ENCODE measurements at regions of chr7 and their contacts with region 1.

Region 1: GRCh38 chr7:44847508-44847920 is 373 bp downstream of the H2AZ2 start:
- DNase-seq: peak; percentile 92
- H3K4me3 Mint-ChIP-seq: peak overlapping the region; percentile 92
- H3K27ac Mint-ChIP-seq: peak overlapping the region; percentile 95
- H3K4me1 Mint-ChIP-seq: peaks cover 41% of the 10 kb centered on the region
- H3K27me3 Mint-ChIP-seq: no peaks in the 10 kb centered on the region

Region 2: GRCh38 chr7:44490351-44491200 is 356.9 kb before region 1 on chr7 and contains the start of gene NUDCD3:
- CTCF ChIA-PET with region 1: interaction called, 5 read pairs
- intact Hi-C with region 1: loop called (anchors 1 kb)
- DNase-seq: peak; percentile 89
- H3K4me3 Mint-ChIP-seq: peak within 1 kb of the TSS; percentile 85
- H3K27ac Mint-ChIP-seq: peak within 1 kb of the TSS; percentile 94
- H3K4me1 Mint-ChIP-seq: peaks cover 41% of the 10 kb centered on the region
- H3K27me3 Mint-ChIP-seq: no peaks in the 10 kb centered on the region
- total RNA-seq, gene NUDCD3: 81.1 to 81.8 TPM

Region 3: DNA sequence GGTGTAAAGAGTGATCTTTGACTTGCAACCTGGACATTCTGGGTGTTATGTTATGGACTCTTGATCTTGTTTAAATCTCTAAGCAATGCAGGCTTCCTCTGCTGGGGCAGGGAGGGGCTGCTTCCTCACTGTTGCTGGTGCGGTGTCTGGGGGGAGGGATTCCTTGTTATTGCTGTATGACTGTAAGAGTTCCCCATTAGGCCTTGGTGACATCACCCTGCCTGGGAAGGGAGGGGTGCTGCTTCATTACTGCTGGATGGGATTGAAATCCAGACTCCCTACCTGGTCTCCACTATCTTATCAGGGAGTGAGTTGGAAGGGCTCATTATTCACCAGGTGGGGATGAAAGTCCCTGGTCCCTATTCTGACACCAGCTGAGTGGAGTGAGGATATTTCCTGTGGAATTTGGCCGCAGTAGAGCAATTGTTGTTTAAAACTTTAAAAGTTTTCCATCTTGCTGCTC is 232.3 kb before region 1 on chr7:
- CTCF ChIA-PET with region 1: no interaction called
- intact Hi-C with region 1: loop called (anchors 1 kb)
- DNase-seq: peak; percentile 57
- H3K4me3 Mint-ChIP-seq: no peak overlapping the region
- H3K27ac Mint-ChIP-seq: peak overlapping the region; percentile 25
- H3K4me1 Mint-ChIP-seq: peaks cover 60% of the 10 kb centered on the region
- H3K27me3 Mint-ChIP-seq: no peaks in the 10 kb centered on the region

Region 4: GRCh38 chr7:44824894-44825526 is 22.5 kb before region 1 on chr7:
- CTCF ChIA-PET with region 1: interaction called, 12 read pairs
- intact Hi-C with region 1: no loop called
- DNase-seq: no peak
- H3K4me3 Mint-ChIP-seq: no peak overlapping the region
- H3K27ac Mint-ChIP-seq: peak overlapping the region; percentile 20
- H3K4me1 Mint-ChIP-seq: peaks cover 12% of the 10 kb centered on the region
- H3K27me3 Mint-ChIP-seq: no peaks in the 10 kb centered on the region

Region 5: DNA sequence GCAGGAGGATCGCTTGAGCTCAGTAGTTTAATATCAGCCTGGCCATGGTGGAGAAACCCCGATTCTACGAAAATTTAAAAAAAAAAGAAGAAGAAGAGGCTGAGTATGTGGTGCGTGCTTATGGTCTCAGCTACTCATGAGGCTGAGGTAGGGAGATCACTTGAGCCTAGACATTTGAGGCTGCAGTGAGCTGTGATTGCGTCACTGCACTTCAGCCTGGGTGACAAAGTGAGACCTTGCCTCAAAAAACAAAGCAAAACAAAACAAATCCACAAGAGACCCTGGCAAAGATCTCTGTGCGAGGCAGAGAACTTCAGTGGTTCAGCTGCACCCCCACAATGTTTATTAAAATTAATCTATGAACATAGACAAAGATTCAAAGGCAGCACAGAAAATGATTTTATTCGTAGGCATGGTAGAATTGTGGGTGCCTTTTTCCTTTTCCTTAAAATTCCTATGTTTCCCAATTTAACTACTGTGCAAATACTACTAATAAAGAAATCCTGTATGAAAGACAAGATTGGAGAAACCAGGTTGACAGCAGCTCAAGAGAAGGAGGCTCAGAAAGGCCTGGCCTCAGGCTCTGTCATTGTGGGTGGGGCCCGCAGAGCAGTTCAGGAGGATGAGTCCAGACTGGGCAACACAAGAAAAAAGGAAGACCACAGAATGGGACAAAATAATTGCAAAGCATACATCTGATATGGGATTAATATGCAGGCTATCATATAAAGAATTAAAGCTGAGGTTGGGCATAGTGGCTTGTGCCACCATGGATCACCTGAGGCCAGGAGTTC is 62.3 kb after region 1 on chr7:
- CTCF ChIA-PET with region 1: no interaction called
- intact Hi-C with region 1: no loop called
- DNase-seq: no peak
- H3K4me3 Mint-ChIP-seq: no peak overlapping the region
- H3K27ac Mint-ChIP-seq: no peak overlapping the region
- H3K4me1 Mint-ChIP-seq: peaks cover 9% of the 10 kb centered on the region
- H3K27me3 Mint-ChIP-seq: peaks cover 2% of the 10 kb centered on the region

Region 6: DNA sequence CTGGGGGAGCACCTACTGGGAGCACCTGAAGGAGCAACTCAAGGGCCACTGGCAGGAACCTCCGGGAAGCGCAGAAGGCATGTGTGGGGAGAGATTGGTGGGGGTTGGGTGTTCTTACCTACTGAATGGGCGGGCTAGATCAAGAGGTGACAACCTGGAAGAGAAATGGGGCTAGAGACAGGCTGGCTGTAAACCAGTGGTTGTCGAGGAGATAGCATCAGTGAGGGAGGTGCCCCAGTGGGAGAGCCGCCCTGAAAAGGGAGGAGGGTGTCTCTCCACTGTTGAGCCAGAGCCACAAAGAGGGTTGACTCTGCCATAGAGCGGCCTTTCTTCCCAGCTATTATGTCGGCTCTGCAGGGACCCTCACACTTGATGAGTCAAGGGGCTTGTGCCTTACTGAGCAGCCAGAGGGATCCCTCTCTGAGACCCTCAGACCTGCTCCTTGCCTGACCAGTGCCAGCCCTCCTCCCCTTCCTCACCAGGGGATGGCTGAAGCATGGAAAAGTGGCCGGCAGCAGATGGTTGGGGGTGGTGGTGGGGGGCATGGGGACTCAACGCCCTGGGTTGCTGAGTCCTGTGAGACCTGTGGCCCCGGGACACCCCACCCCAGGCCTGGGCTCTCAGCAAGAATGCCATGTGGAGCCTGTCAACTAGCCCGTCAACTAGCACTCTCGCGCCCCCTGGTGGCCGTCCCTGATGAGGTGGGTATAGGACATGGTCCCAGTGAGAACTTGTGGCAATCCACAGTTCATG is 74.3 kb after region 1 on chr7:
- CTCF ChIA-PET with region 1: interaction called, 8 read pairs
- intact Hi-C with region 1: loop called (anchors 2 kb)
- DNase-seq: peak; percentile 99
- H3K4me3 Mint-ChIP-seq: no peak overlapping the region
- H3K27ac Mint-ChIP-seq: peak overlapping the region; percentile 30
- H3K4me1 Mint-ChIP-seq: peaks cover 8% of the 10 kb centered on the region
- H3K27me3 Mint-ChIP-seq: no peaks in the 10 kb centered on the region

Region 7: DNA sequence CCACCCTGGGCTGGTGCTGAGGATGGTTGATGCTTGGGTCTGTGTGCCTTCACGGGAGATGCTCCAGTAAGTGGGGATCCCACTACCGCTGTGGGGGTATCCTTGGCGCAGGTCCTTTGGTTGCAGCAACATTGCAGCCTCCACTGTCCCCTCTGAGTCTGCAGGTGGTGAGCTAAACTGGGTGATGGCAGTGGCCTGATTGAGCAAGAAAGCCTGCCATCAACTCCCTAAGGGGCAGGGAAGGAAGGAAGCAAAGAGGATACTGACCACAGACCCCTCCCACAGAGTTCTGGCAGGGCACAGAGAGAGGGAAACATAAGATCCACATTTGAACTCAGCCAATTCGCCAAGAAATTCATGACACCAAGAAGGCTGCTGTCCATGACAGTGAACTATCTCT is 88.1 kb after region 1 on chr7:
- CTCF ChIA-PET with region 1: no interaction called
- intact Hi-C with region 1: no loop called
- DNase-seq: no peak
- H3K4me3 Mint-ChIP-seq: no peak overlapping the region
- H3K27ac Mint-ChIP-seq: no peak overlapping the region
- H3K4me1 Mint-ChIP-seq: no peaks in the 10 kb centered on the region
- H3K27me3 Mint-ChIP-seq: no peaks in the 10 kb centered on the region

Region 8: GRCh38 chr7:45136106-45137060 is 288.9 kb after region 1 on chr7:
- CTCF ChIA-PET with region 1: interaction called, 75 read pairs
- intact Hi-C with region 1: loop called (anchors 2 kb)
- DNase-seq: peak; percentile 87
- H3K4me3 Mint-ChIP-seq: no peak overlapping the region
- H3K27ac Mint-ChIP-seq: no peak overlapping the region
- H3K4me1 Mint-ChIP-seq: peaks cover 7% of the 10 kb centered on the region
- H3K27me3 Mint-ChIP-seq: no peaks in the 10 kb centered on the region